Lower leg skin (tissue), 4 donors: ENCODE measurements at regions of chr12 and their contacts with region 1.

Region 1: GRCh38 chr12:54401119-54401518 is 16.6 kb upstream of the ZNF385A start:
- DNase-seq: no peak
- H3K4me3 ChIP-seq: no peak overlapping the region
- CTCF ChIP-seq: no peak
- POLR2A ChIP-seq: no peak

Region 2: DNA sequence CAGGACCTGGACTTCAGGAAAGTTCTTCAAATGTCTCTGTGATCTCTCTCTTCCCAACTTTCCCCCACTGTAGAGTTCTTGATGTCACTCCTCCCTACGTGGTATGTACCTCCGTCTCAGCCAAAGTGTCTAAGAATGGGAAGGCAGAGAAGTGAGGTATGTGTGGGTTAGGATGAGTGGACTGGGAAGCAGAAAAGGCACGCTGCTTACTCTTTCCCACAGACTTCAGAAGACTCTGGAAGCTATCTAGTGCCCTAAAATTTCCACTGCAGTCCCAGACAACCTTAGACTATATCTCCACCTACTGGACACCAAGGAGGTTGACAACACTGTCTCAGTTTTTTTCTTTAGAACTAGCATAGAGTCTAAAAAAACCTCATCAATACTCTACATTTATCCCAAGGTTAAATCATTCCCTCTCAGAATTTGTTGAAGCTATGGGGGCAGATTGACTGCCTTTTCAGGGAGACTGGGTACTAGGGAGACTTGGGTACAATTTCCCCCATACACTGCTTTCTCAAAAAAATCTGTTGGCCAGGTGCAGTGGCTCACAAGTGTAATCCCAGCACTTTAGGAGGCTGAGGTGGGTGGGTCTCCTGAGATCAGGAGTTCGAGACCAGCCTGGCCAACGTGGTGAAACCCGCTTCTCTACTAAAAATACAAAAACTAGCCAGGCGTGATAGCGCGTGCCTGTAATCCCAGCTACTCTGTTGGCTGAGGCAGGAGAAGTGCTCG is 38.6 kb after region 1 on chr12:
- intact Hi-C with region 1: loop called (anchors 2 kb)
- DNase-seq: no peak
- H3K4me3 ChIP-seq: no peak overlapping the region
- CTCF ChIP-seq: peak in 1 of 3 donors; percentile 51
- POLR2A ChIP-seq: no peak

Region 3: DNA sequence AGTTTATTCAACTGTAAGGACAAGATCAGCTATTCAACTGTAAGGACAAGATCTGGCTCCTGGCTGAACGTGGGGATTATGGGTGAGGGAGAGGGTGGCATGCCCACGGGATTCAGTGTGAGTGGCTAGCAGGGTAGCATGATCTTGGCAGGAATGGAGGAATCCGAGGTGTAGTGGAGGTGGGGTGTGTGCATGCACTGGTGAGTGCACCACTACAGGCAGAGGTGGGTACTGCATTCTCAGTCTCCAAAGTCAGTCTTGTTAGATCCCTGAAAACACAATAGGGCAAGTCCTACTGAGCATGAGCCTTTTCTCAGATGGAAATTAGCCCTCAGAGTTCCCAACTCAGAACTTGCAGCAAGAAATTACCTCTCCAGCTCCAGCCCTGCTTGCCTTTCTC is 279.3 kb after region 1 on chr12:
- intact Hi-C with region 1: no loop called
- DNase-seq: no peak
- H3K4me3 ChIP-seq: no peak overlapping the region
- CTCF ChIP-seq: no peak
- POLR2A ChIP-seq: no peak